GM13977 (cell line): ENCODE measurements at regions of chr6 and their contacts with region 1.

Region 1: DNA sequence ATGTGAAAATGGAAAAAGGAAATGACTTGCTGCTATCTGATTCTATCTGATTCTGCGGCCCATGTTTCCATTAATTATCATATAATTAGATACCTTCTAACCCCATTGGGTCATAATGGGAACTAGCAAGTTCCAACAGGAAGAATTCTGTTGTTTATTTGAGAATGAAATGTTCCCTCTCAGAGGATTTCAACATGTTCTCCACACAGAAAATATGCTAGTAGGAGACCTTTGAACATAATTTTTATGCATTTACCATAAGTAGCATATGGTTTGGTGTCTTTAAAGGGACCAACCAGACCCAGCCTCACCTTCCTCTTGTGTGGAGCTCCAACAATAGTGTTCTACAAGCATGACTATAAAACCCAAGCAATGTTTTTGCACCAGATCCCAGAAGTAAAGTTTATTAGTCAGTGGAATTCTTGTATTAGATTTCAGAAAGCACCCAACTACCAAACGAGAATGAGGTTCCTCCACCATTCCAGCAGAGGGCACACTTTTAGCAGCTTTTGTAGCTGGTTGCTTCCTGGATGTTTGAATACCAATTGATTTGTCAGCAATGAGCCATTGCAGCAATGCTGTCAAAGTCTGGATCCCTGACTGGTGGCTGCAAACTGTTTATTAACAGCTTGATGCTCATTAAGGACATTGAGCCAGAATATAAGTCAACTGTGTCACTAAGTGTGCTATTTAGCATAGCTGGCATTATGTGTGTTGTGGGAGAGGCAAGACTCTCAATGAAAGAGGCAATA is 143.6 kb upstream of the GJE1 start:
- DNase-seq: peak; percentile 45
- CTCF ChIP-seq: peak; percentile 74

Region 2: DNA sequence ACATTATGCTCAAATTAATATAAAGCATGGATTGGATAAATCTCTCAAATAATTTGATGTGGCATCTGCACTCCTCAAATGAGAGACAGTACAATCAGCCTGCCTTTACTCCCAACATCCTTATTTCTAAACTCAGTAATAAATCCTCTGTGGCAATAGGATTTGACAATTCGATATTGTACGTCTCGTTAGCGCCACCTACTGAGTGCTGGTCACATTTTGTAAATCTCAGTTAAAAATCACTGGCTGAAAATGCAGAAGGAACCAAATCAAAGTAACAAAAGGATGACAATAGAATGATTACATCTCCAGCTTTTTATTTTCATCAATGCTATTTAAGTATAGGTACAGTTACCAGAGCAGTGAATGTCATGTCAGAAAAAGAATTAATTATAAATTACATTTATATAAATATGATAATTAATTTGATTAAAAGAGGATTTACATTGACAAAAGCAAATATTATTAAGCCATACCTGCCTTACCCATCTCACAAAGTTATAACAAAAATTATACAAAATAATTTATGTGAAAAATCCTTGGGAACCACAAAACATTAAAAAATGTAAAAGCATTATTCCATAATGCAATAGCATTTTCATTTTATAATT is 123.4 kb after region 1 on chr6:
- in situ Hi-C with region 1: loop called (anchors 25 kb)
- DNase-seq: peak; percentile 40
- CTCF ChIP-seq: peak; percentile 86